ENCODE measurements at regions of chr11 and their contacts with region 1.

Region 1: GRCh38 chr11:67507864-67508485 is at the start of gene CDK2AP2:
- DNase-seq: peak; percentile 100
- H3K4me3 ChIP-seq: peak within 1 kb of the TSS; percentile 60 to 98 (median 71)
- H3K27ac ChIP-seq: peak within 1 kb of the TSS; percentile 83
- H3K4me1 ChIP-seq: peaks cover 37% of the 10 kb centered on the region
- H3K27me3 ChIP-seq: no peaks in the 10 kb centered on the region
- CTCF ChIP-seq: no peak
- total RNA-seq, gene CDK2AP2: 19.2 to 45.9 TPM

Region 2: DNA sequence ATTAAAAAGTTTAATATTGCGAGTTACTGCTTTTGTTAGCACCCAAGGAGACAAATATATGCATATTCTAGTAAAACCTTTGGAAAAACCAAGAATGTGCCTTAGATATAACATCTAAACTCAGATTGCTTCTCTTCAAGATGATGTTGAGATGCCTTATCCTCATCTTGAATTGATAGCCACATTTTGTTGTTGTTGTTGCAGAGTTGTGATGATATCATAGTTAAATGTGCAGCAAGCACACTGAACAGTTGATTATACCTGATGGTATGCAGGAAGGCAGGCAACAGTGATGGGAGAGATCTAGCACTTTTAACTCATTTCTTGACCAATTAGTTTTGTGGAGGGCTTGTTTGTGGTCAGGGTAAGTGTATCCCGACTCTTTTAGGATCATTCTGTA is 340.9 kb before region 1 on chr11:
- CTCF ChIA-PET with region 1: interaction called, 12 read pairs
- dilution Hi-C with region 1: no loop called
- in situ Hi-C with region 1: no loop called
- intact Hi-C with region 1: no loop called
- DNase-seq: no peak
- H3K4me3 ChIP-seq: no peak overlapping the region
- H3K27ac ChIP-seq: no peak overlapping the region
- H3K4me1 ChIP-seq: peaks cover 16% of the 10 kb centered on the region
- H3K27me3 ChIP-seq: no peaks in the 10 kb centered on the region
- CTCF ChIP-seq: no peak

Region 3: DNA sequence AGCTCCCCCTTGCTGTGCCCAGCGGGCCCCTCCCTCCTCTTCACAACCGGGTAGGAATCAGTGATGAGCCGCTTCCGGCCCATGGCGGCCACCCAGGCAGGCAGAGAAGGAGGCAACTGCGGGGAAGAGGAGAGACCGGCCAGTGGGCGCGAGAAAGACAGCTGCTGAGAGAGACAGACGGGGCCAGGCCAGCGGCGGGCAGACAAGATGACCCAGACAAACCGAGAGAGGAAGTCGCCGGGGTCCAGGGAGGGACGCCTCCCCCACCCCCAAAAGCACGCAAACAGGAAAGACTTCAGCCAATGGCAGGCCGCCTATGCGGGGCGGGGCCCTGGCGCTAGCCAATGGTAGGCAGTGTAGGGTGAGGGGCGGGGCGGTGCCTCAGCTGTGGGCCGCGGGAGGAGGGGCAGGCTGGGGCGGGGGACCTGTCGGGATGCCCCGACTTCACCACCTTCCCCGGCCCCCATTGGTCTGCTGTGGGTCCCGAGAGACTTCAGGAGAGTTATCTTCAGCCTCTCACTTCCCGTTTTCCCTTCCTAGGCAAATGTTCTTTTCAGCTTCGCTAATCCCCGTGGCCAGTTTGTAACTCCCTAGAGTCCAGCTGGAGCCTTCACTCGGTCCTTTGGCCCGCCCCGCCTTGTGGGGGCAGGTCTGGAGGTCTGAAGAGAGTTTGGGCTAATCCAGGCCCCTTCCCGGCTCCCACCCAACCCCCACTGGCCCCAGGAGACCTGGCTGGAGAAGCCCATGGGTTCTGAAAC is 154.5 kb before region 1 on chr11 and contains the start of gene POLD4:
- CTCF ChIA-PET with region 1: no interaction called
- dilution Hi-C with region 1: no loop called
- in situ Hi-C with region 1: no loop called
- intact Hi-C with region 1: loop called (anchors 1 kb)
- DNase-seq: peak; percentile 87
- H3K4me3 ChIP-seq: peak within 1 kb of the TSS; percentile 59 to 90 (median 73)
- H3K27ac ChIP-seq: peak within 1 kb of the TSS; percentile 78
- H3K4me1 ChIP-seq: peaks cover 62% of the 10 kb centered on the region
- H3K27me3 ChIP-seq: no peaks in the 10 kb centered on the region
- CTCF ChIP-seq: no peak
- total RNA-seq, gene POLD4: 39.2 to 75.2 TPM

Region 4: GRCh38 chr11:67401495-67402191 is 106.3 kb before region 1 on chr11 and contains the start of gene PPP1CA:
- CTCF ChIA-PET with region 1: no interaction called
- dilution Hi-C with region 1: no loop called
- in situ Hi-C with region 1: loop called in 1 of 2 experiments (anchors 5 kb)
- intact Hi-C with region 1: loop called (anchors 1 kb)
- DNase-seq: peak; percentile 81
- H3K4me3 ChIP-seq: peak within 1 kb of the TSS; percentile 85 to 95 (median 89)
- H3K27ac ChIP-seq: peak within 1 kb of the TSS; percentile 58
- H3K4me1 ChIP-seq: peaks cover 17% of the 10 kb centered on the region
- H3K27me3 ChIP-seq: no peaks in the 10 kb centered on the region
- CTCF ChIP-seq: peak in 1 of 2 donors; percentile 29
- total RNA-seq, gene PPP1CA: 178 to 182 TPM

Region 5: GRCh38 chr11:67428052-67428914 is 79.7 kb before region 1 on chr11 and contains the start of gene RPS6KB2:
- CTCF ChIA-PET with region 1: no interaction called
- dilution Hi-C with region 1: no loop called
- in situ Hi-C with region 1: no loop called
- intact Hi-C with region 1: loop called (anchors 1 kb)
- DNase-seq: peak; percentile 95
- H3K4me3 ChIP-seq: peak within 1 kb of the TSS; percentile 62 to 72 (median 71)
- H3K27ac ChIP-seq: peak within 1 kb of the TSS; percentile 58
- H3K4me1 ChIP-seq: peaks cover 12% of the 10 kb centered on the region
- H3K27me3 ChIP-seq: no peaks in the 10 kb centered on the region
- CTCF ChIP-seq: no peak
- total RNA-seq, gene RPS6KB2: 35.7 to 62.3 TPM

Region 6: GRCh38 chr11:67468835-67469811 is 38.9 kb before region 1 on chr11 and contains the start of gene TMEM134:
- CTCF ChIA-PET with region 1: no interaction called
- dilution Hi-C with region 1: no loop called
- in situ Hi-C with region 1: no loop called
- intact Hi-C with region 1: loop called (anchors 1 kb)
- DNase-seq: peak; percentile 80
- H3K4me3 ChIP-seq: peak within 1 kb of the TSS; percentile 86 to 95 (median 92)
- H3K27ac ChIP-seq: peak within 1 kb of the TSS; percentile 71
- H3K4me1 ChIP-seq: peaks cover 20% of the 10 kb centered on the region
- H3K27me3 ChIP-seq: no peaks in the 10 kb centered on the region
- CTCF ChIP-seq: peak; percentile 24 to 53
- total RNA-seq, gene TMEM134: 55.3 to 69.4 TPM

Region 7: DNA sequence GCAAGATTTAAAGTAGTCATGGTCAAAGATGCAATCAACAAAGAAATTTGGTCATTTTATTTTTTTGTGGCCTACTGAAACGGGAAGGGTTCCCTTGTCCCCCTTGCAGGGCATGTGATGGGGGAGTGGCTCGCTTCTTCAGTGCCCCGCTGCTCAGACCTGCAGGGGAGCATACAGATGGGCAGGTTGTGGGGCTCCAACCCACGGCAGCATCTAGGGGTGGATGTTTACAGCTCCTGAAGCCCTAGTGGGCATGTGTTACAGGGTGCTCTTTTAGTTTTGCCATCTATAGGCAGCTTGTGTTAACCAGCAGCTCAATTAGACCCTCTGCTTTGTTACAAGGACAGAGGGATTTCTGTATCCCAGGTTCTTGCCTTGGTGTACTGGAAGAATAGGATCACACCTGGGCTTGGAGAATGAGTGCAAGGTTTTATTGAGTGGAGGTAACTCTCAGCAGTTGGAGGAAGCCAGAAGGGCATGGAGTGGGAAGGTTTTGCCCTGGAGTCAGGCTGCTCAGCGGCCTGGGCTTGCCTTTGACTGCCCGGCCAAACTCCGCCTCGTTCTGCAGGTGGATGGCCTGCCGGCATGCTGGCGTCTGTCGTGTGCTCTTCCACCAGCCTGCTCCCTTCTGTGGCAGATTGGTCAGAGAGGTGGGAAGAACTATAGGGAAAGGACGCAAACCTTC is 85.0 kb after region 1 on chr11:
- CTCF ChIA-PET with region 1: no interaction called
- dilution Hi-C with region 1: no loop called
- in situ Hi-C with region 1: no loop called
- intact Hi-C with region 1: no loop called
- DNase-seq: peak; percentile 17
- H3K4me3 ChIP-seq: no peak overlapping the region
- H3K27ac ChIP-seq: no peak overlapping the region
- H3K4me1 ChIP-seq: peaks cover 14% of the 10 kb centered on the region
- H3K27me3 ChIP-seq: no peaks in the 10 kb centered on the region
- CTCF ChIP-seq: no peak

Measured in mammary epithelial cell (primary cell).